A673 (cell line): ENCODE measurements at regions of chr1 and their contacts with region 1.

Region 1: GRCh38 chr1:51044834-51045233 is 57.2 kb upstream of the C1orf185 start:
- DNase-seq: peak; percentile 32
- H3K4me3 ChIP-seq: no peak overlapping the region
- H3K27ac ChIP-seq: no peak overlapping the region
- H3K4me1 ChIP-seq: no peaks in the 10 kb centered on the region
- H3K27me3 ChIP-seq: no peaks in the 10 kb centered on the region
- CTCF ChIP-seq: peak; percentile 58; the same call in 1 of the 2 replicates

Region 2: GRCh38 chr1:50474859-50475809 is 569.7 kb before region 1 on chr1:
- CTCF ChIA-PET with region 1: no interaction called
- POLR2A ChIA-PET with region 1: no interaction called
- intact Hi-C with region 1: no loop called
- DNase-seq: no peak
- H3K4me3 ChIP-seq: no peak overlapping the region
- H3K27ac ChIP-seq: no peak overlapping the region
- H3K4me1 ChIP-seq: no peaks in the 10 kb centered on the region
- H3K27me3 ChIP-seq: no peaks in the 10 kb centered on the region
- CTCF ChIP-seq: no peak

Region 3: DNA sequence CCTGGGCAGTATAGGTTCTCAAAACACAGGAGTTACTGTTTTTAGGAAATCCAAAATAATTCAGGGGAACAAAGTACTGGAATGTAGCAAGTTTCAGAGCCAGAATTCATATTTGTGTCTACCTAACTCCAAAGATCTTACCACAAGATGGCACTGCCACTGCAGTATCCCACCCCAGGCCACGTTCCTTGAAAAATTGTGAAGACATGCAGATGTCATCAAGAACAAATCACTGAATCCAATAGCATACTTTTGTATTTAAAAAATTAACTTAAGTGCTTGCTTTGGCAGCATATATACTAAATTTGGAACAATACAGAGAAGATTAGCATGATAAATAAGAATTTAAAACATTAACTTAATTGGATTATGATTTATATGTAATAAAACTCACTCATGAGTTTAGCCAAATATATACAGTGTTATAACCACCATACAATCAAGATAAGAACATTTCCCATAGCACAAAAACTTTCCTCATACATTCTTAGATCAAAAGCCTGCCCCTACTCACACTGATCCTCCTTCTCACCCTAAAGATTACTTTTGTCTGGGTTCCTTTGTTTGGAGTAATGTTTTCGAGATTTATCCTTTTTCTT is 294.7 kb before region 1 on chr1:
- CTCF ChIA-PET with region 1: no interaction called
- POLR2A ChIA-PET with region 1: no interaction called
- intact Hi-C with region 1: loop called (anchors 5 kb)
- DNase-seq: peak; percentile 76
- H3K4me3 ChIP-seq: no peak overlapping the region
- H3K27ac ChIP-seq: no peak overlapping the region
- H3K4me1 ChIP-seq: peaks cover 11% of the 10 kb centered on the region
- H3K27me3 ChIP-seq: no peaks in the 10 kb centered on the region
- CTCF ChIP-seq: peak; percentile 78

Region 4: GRCh38 chr1:50774759-50775351 is 270.0 kb before region 1 on chr1:
- CTCF ChIA-PET with region 1: no interaction called
- POLR2A ChIA-PET with region 1: no interaction called
- intact Hi-C with region 1: loop called (anchors 2 kb)
- DNase-seq: peak; percentile 74
- H3K4me3 ChIP-seq: no peak overlapping the region
- H3K27ac ChIP-seq: no peak overlapping the region
- H3K4me1 ChIP-seq: no peaks in the 10 kb centered on the region
- H3K27me3 ChIP-seq: no peaks in the 10 kb centered on the region
- CTCF ChIP-seq: peak; percentile 79

Region 5: DNA sequence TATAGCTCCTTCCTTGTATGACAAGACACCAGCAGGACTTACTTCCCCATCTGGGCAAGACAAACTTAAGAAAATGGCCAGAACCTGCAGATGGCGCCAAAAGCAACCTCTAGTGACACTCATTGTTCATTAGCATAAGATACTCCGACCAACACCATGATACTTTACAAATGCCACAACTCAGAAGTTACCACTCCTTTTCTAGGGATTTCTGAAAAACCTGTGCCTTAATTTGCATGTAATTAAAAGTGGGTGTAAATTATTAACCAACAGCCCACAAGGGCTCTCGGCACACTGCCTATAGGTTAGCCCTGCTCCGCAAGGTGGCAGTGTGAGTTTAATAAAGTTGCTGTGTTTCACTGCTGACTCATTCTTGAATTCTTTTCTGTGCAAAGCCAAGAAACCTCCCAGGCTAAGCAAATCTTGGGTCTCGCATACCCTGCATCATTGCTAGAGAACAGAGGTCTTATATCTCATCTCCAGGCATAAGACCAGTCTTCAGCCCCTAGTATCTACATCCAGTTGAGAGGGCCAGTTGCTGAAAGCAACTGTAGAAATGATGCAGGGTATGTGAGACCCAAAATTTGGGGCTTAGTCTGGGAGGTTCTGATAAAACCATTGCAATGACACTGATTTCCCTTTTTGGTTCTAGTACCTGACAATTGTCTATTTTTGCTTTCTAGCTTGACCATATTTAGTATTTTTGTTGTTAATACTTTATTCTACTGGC is 171.2 kb before region 1 on chr1:
- CTCF ChIA-PET with region 1: interaction called, 4 read pairs
- POLR2A ChIA-PET with region 1: no interaction called
- intact Hi-C with region 1: loop called (anchors 2 kb)
- DNase-seq: peak; percentile 93
- H3K4me3 ChIP-seq: peak overlapping the region; percentile 32
- H3K27ac ChIP-seq: peak overlapping the region; percentile 48
- H3K4me1 ChIP-seq: peaks cover 10% of the 10 kb centered on the region
- H3K27me3 ChIP-seq: no peaks in the 10 kb centered on the region
- CTCF ChIP-seq: peak; percentile 99

Region 6: DNA sequence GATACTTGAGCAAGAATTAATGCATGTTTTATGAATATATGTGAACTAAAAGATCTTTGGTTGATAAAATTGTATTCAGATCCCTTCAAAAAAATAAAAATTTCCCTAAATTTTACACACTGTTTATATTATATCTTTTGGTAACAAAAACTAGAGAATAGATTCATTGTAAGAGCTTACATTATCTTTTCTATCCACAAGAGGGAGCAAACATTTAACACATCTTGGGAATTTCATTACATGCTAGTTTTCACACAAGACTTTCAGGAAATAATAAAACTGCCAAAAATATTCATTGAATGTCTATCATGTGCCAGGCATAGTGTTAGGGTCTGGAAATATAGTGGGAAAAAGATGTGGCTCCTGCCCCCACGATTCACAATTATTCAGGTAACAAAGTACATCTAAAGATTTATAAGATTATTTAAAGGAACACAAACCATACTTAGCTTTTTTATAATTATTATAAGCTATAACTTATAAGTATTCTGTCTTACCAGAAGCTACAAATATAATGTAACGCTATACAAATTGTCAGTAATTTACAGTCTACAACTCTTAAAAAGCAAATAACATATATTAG is 115.4 kb before region 1 on chr1:
- CTCF ChIA-PET with region 1: interaction called, 4 read pairs
- POLR2A ChIA-PET with region 1: no interaction called
- intact Hi-C with region 1: loop called (anchors 5 kb)
- DNase-seq: peak; percentile 63
- H3K4me3 ChIP-seq: no peak overlapping the region
- H3K27ac ChIP-seq: no peak overlapping the region
- H3K4me1 ChIP-seq: no peaks in the 10 kb centered on the region
- H3K27me3 ChIP-seq: no peaks in the 10 kb centered on the region
- CTCF ChIP-seq: peak; percentile 72

Region 7: GRCh38 chr1:51157395-51157794 is 112.6 kb after region 1 on chr1:
- CTCF ChIA-PET with region 1: no interaction called
- POLR2A ChIA-PET with region 1: no interaction called
- intact Hi-C with region 1: no loop called
- DNase-seq: peak; percentile 17
- H3K4me3 ChIP-seq: no peak overlapping the region
- H3K27ac ChIP-seq: no peak overlapping the region
- H3K4me1 ChIP-seq: no peaks in the 10 kb centered on the region
- H3K27me3 ChIP-seq: no peaks in the 10 kb centered on the region
- CTCF ChIP-seq: no peak